Activated CD4-positive, alpha-beta T cell treated with anti-CD3 and anti-CD28 coated beads, Interleukin-2, amount 10 ng/mL, durations not matched to agents 24 days and 14 days (primary cell): ENCODE measurements at regions of chr15 and their contacts with region 1.

Region 1: DNA sequence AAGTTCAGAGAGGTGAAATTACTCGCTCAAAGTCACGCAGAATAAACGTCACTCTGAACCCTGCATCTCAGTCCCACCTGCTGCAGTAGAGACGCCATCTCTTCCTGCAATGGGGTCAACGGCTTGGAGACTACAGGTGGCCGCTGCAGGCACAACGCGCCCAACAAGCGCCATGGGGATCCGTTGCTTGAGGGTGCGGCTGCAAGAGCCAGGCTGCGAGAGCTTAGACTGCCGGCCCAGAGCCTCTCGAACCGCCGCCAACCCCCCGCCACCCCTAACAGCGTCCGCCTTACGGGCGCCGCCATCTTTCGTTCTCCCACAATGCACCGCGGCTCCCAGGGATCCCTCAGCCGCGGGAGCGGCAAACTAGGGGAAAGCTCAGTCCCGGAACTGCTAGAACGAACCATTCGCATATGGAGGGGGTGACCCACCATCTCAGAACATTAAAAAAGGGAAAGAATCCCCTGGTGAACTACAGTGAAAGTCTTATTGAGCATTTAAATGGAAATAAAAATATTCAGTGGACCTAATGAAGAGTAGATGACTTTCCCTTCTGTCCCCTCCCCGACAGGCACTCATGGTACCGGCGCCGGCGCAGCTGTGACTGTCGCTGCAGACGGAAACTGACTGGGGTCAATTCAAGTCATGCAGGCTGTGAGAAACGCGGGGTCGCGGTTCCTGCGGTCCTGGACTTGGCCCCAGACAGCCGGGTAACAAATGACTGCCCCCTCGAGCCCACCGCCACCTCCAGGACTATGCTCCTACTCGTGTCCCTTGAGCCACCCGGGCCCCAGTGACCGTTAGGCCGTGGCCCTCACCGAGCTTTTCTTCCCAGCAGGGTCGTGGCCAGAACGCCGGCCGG is at the starts of genes MRPL46 and MRPS11:
- DNase-seq: peak; percentile 97
- H3K4me3 Mint-ChIP-seq: peak within 1 kb of the TSS; percentile 93
- H3K27ac Mint-ChIP-seq: peak within 1 kb of the TSS; percentile 97
- H3K4me1 Mint-ChIP-seq: peaks cover 33% of the 10 kb centered on the region
- H3K27me3 Mint-ChIP-seq: no peaks in the 10 kb centered on the region
- total RNA-seq, gene MRPL46: 49.1 and 51.9 TPM in 2 replicates
- total RNA-seq, gene MRPS11: 68.7 and 72.6 TPM in 2 replicates

Region 2: GRCh38 chr15:88440021-88440420 is 27.3 kb before region 1 on chr15:
- intact Hi-C with region 1: no loop called
- DNase-seq: no peak
- H3K4me3 Mint-ChIP-seq: no peak overlapping the region
- H3K27ac Mint-ChIP-seq: no peak overlapping the region
- H3K4me1 Mint-ChIP-seq: peaks cover 2% of the 10 kb centered on the region
- H3K27me3 Mint-ChIP-seq: peaks cover 28% of the 10 kb centered on the region

Region 3: DNA sequence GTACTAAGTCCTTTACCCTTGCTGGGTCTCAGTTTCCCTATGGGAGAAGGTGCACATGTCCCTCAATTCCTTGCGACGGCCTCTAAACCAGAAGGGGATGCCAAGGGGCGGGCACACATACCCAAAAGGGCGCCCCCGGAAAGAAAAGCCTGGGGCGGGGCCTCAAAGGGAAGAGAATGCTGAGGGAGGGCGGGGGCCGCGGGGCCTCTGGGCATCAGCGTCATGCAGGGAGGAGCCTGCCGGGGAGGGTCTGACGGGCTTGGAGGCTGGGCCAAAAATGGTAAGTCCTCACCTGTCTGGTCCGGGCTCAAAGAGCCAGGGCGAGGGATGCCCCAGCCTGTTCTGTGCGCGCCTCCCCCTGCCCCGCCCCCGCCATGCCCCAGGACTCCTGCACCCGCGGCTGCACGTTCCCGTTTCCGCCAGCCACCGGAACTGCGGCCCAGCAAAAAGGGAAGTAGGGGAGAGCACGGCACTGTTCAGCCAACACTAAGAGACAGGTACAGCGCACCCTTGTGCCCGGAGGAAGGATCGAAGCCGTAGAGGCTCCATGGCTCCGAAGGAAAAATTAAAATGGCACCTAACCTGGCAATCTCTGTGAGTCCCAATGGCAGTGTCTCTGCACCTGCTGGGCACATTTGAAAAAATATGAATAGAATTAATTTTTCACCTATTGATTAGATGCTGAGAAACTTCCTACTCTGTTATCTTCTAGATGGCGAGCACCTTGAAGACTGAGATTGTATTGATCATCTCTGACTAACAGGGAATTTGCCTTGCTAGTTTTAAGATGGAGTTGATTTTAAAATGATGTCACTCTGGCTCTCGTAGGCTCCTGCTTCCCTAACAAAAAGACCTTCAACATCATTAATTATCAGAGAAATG is 79.2 kb after region 1 on chr15 and contains the start of gene DET1:
- intact Hi-C with region 1: loop called (anchors 2 kb)
- DNase-seq: peak; percentile 97
- H3K4me3 Mint-ChIP-seq: peak within 1 kb of the TSS; percentile 92
- H3K27ac Mint-ChIP-seq: peak within 1 kb of the TSS; percentile 91
- H3K4me1 Mint-ChIP-seq: peaks cover 12% of the 10 kb centered on the region
- H3K27me3 Mint-ChIP-seq: no peaks in the 10 kb centered on the region
- total RNA-seq, gene DET1: 2.1 and 2.8 TPM in 2 replicates